ENCODE measurements at regions of chr3 and their contacts with region 1.

Region 1: DNA sequence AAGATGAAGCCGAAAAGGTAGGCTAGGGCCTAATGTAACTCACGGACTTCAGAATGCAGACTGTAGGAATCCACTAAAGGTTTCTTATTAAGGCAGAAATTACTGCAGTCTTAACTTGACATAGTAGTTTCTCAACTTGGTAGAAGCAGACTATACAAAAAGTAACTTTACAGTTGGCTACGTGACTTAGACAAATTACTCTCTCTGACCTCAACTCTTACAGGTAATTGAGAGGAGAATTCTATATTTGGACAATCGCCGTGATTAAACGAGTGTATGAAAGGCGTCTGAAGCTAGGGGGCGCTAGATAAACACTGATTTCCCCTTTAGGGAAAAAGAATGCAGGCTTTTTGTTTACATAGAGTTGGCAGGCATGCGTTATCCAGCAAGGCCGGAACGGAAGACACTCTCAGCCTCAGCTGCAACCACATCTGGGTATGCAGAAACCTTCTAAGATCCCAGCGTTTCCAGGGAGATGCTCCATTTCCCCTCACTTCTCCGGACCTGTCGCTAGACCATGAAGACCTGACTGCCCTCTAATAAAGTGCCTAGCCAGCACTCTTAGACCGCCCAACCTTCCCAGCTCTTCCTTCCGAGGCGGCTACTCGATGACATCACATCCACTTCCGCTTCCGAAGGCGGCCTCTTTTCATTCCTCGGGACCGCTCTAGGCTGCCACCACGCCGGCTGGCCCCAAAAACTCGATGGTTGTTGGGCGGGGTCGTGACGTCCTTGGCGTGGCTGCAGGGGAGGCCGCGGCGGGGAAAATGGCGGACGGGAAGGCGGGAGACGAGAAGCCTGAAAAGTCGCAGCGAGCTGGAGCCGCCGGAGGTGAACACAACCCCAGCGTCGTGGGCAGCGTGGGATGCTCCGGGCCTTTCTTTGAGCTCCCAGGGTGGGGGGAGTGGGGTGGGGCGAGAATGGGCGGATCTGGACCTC is at the start of gene PCNP:
- DNase-seq: peak; percentile 97 to 99 (median 99)
- ATAC-seq: peak; percentile 73
- H3K4me3 ChIP-seq: peak within 1 kb of the TSS; percentile 96
- H3K4me3 Mint-ChIP-seq: peak within 1 kb of the TSS; percentile 99
- H3K27ac ChIP-seq: peak within 1 kb of the TSS; percentile 97 to 99
- H3K27ac Mint-ChIP-seq: peak within 1 kb of the TSS; percentile 96
- H3K4me1 ChIP-seq: peaks cover 40% of the 10 kb centered on the region
- H3K4me1 Mint-ChIP-seq: peaks cover 80% of the 10 kb centered on the region
- H3K27me3 ChIP-seq: no peaks in the 10 kb centered on the region
- H3K27me3 Mint-ChIP-seq: no peaks in the 10 kb centered on the region
- CTCF ChIP-seq: peak; percentile 85
- total RNA-seq, gene PCNP: 177 to 181 TPM

Region 2: GRCh38 chr3:100708967-100709841 is 864.5 kb before region 1 on chr3 and contains the start of gene TFG:
- CTCF ChIA-PET with region 1: no interaction called
- POLR2A ChIA-PET with region 1: no interaction called
- intact Hi-C with region 1: loop called in 1 of 2 experiments (anchors 10 kb)
- DNase-seq: peak; percentile 94 to 100 (median 96)
- ATAC-seq: peak; percentile 91
- H3K4me3 ChIP-seq: peak within 1 kb of the TSS; percentile 73
- H3K4me3 Mint-ChIP-seq: peak within 1 kb of the TSS; percentile 97
- H3K27ac ChIP-seq: peak within 1 kb of the TSS; percentile 77 to 94
- H3K27ac Mint-ChIP-seq: peak within 1 kb of the TSS; percentile 97
- H3K4me1 ChIP-seq: peaks cover 24% of the 10 kb centered on the region
- H3K4me1 Mint-ChIP-seq: peaks cover 49% of the 10 kb centered on the region
- H3K27me3 ChIP-seq: no peaks in the 10 kb centered on the region
- H3K27me3 Mint-ChIP-seq: peaks cover 16% of the 10 kb centered on the region
- CTCF ChIP-seq: no peak
- total RNA-seq, gene TFG: 56.5 to 58.8 TPM

Region 3: GRCh38 chr3:101512646-101513418 is 60.9 kb before region 1 on chr3 and contains the start of gene SENP7:
- CTCF ChIA-PET with region 1: interaction called, 16 read pairs
- POLR2A ChIA-PET with region 1: interaction called, 70 read pairs
- intact Hi-C with region 1: loop called (anchors 1 to 2 kb)
- DNase-seq: peak; percentile 55 to 90 (median 74)
- ATAC-seq: peak; percentile 51
- H3K4me3 ChIP-seq: peak within 1 kb of the TSS; percentile 68
- H3K4me3 Mint-ChIP-seq: peak within 1 kb of the TSS; percentile 99
- H3K27ac ChIP-seq: peak within 1 kb of the TSS; percentile 87 to 88
- H3K27ac Mint-ChIP-seq: peak within 1 kb of the TSS; percentile 96
- H3K4me1 ChIP-seq: peaks cover 22% of the 10 kb centered on the region
- H3K4me1 Mint-ChIP-seq: peaks cover 61% of the 10 kb centered on the region
- H3K27me3 ChIP-seq: no peaks in the 10 kb centered on the region
- H3K27me3 Mint-ChIP-seq: no peaks in the 10 kb centered on the region
- CTCF ChIP-seq: no peak
- total RNA-seq, gene SENP7: 37.5 to 39.3 TPM

Region 4: GRCh38 chr3:101544161-101544850 is 29.4 kb before region 1 on chr3:
- CTCF ChIA-PET with region 1: no interaction called
- POLR2A ChIA-PET with region 1: interaction called, 19 read pairs
- intact Hi-C with region 1: no loop called
- DNase-seq: peak in 1 of 14 experiments; percentile 20
- ATAC-seq: peak; percentile 53
- H3K4me3 ChIP-seq: no peak overlapping the region
- H3K4me3 Mint-ChIP-seq: peak overlapping the region; percentile 38
- H3K27ac ChIP-seq: peak overlapping the region in 1 of 2 donors; percentile 35
- H3K27ac Mint-ChIP-seq: peak overlapping the region; percentile 93
- H3K4me1 ChIP-seq: peaks cover 19% of the 10 kb centered on the region
- H3K4me1 Mint-ChIP-seq: peaks cover 47% of the 10 kb centered on the region
- H3K27me3 ChIP-seq: no peaks in the 10 kb centered on the region
- H3K27me3 Mint-ChIP-seq: no peaks in the 10 kb centered on the region
- CTCF ChIP-seq: peak; percentile 50

Region 5: GRCh38 chr3:101643861-101644613 is 70.3 kb after region 1 on chr3:
- CTCF ChIA-PET with region 1: no interaction called
- POLR2A ChIA-PET with region 1: interaction called, 4 read pairs
- intact Hi-C with region 1: loop called (anchors 5 kb)
- DNase-seq: peak in 8 of 14 experiments; percentile 19 to 85 (median 30)
- ATAC-seq: peak; percentile 82
- H3K4me3 ChIP-seq: no peak overlapping the region
- H3K4me3 Mint-ChIP-seq: no peak overlapping the region
- H3K27ac ChIP-seq: peak overlapping the region in 1 of 2 donors; percentile 24
- H3K27ac Mint-ChIP-seq: peak overlapping the region; percentile 52
- H3K4me1 ChIP-seq: peaks cover 22% of the 10 kb centered on the region
- H3K4me1 Mint-ChIP-seq: peaks cover 21% of the 10 kb centered on the region
- H3K27me3 ChIP-seq: no peaks in the 10 kb centered on the region
- H3K27me3 Mint-ChIP-seq: no peaks in the 10 kb centered on the region
- CTCF ChIP-seq: no peak

Region 6: DNA sequence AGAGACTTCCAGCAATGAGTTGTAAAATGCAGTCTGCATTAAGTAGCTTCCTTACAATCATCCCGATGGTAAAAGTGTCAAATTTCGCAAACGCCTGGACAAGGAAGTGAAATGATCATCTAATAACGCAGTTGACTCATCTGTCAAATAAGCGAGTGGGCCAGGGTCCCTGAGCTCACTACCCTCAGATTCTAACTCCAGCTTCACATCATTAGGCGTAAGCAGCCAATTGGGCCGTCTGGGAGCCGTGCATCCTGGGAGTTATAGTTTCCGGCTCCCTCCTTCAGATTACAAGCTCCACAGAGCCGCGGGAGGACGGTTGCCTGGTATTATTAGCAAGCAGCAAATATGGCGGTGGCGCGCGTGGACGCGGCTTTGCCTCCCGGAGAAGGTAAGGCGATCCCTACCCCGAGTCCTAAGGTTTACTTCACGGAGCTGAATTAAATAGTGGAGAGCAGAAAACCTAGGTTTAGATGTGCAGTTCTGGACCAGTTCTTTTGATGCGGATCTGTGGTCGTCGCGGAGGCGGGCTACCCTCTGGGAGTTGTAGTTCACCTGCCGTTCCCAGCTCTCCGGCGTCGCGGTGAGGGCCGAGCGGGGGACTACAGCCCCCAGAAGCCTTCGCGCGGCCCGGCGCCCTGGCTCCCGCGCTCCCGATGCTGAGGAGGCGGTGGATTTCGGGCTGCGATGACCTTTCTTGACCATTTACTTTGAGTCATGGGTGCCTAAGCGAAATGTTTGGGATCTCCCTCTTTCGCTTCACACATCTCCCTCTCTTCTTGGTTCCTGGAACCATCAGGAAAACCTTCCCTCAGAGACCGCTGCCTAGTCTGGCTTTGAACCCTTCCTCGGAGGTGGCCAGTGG is 150.8 kb after region 1 on chr3 and contains the start of gene CEP97:
- CTCF ChIA-PET with region 1: no interaction called
- POLR2A ChIA-PET with region 1: interaction called, 11 read pairs
- intact Hi-C with region 1: no loop called
- DNase-seq: peak; percentile 75 to 92 (median 80)
- ATAC-seq: peak; percentile 94
- H3K4me3 ChIP-seq: peak within 1 kb of the TSS; percentile 99
- H3K4me3 Mint-ChIP-seq: peak within 1 kb of the TSS; percentile 97
- H3K27ac ChIP-seq: peak within 1 kb of the TSS; percentile 75 to 81
- H3K27ac Mint-ChIP-seq: peak within 1 kb of the TSS; percentile 89
- H3K4me1 ChIP-seq: peaks cover 42% of the 10 kb centered on the region
- H3K4me1 Mint-ChIP-seq: peaks cover 46% of the 10 kb centered on the region
- H3K27me3 ChIP-seq: no peaks in the 10 kb centered on the region
- H3K27me3 Mint-ChIP-seq: no peaks in the 10 kb centered on the region
- CTCF ChIP-seq: no peak
- total RNA-seq, gene CEP97: 6.3 to 6.6 TPM

Measured in CD4-positive, alpha-beta T cell (primary cell).